ENCODE measurements at regions of chrX and their contacts with region 1.

Region 1: DNA sequence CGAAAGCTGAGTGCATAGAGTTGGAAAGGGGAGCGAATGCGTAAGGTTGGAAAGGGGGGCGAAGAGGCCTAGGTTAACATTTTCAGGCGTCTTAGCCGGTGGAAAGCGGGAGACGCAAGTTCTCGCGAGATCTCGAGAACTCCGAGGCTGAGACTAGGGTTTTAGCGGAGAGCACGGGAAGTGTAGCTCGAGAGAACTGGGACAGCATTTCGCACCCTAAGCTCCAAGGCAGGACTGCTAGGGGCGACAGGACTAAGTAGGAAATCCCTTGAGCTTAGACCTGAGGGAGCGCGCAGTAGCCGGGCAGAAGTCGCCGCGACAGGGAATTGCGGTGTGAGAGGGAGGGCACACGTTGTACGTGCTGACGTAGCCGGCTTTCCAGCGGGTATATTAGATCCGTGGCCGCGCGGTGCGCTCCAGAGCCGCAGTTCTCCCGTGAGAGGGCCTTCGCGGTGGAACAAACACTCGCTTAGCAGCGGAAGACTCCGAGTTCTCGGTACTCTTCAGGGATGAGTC is at the start of gene DDX3X:
- DNase-seq: peak; percentile 95
- H3K4me3 Mint-ChIP-seq: peak within 1 kb of the TSS; percentile 98
- H3K27ac Mint-ChIP-seq: peak within 1 kb of the TSS; percentile 100
- H3K4me1 Mint-ChIP-seq: peaks cover 25% of the 10 kb centered on the region
- H3K27me3 Mint-ChIP-seq: no peaks in the 10 kb centered on the region
- total RNA-seq, gene DDX3X: 307 and 313 TPM in 2 replicates

Region 2: DNA sequence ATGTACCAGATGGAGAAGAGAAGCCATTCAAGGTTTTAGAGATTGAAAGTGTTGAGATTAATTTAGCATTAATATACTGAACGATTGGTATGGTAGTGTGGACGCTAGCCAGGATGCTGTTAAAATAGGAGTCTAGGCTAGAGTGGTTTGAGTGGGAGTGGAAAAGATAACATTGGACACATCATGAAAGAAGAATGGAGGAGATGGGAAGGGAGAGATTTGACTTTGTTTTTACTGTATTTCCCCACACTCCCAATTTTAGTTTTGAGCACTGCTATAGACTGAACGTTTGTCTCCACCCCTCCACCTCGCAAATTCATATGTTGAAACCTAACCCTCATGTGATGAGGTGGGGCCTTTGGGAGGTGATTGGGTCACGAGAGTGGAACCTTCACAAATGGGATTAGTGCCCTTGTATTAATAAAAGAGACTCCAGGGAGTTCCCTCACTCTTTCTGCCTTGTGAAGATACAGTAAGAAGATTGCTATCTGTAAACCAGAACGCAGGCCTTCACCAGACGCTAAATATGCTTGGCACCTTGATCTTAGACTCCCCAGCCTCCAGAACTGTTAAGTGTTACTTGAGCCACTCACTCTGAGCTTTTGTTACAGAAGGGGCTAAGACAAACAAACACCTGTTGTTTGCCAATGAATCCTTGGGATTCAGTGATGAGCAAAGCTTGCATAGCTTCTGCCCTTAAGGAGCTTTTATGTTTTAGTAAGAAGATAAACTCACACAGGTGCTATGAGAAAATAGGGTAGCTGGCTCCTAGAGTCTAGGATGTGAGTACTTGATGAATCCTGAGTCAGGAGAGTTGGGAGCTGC is 222.8 kb before region 1 on chrX:
- intact Hi-C with region 1: no loop called
- DNase-seq: no peak
- H3K4me3 Mint-ChIP-seq: no peak overlapping the region
- H3K27ac Mint-ChIP-seq: peak overlapping the region; percentile 29
- H3K4me1 Mint-ChIP-seq: peaks cover 46% of the 10 kb centered on the region
- H3K27me3 Mint-ChIP-seq: no peaks in the 10 kb centered on the region

Region 3: GRCh38 chrX:41275661-41276609 is 57.9 kb before region 1 on chrX:
- intact Hi-C with region 1: loop called (anchors 2 kb)
- DNase-seq: peak; percentile 82
- H3K4me3 Mint-ChIP-seq: peak overlapping the region; percentile 82
- H3K27ac Mint-ChIP-seq: peak overlapping the region; percentile 81
- H3K4me1 Mint-ChIP-seq: peaks cover 7% of the 10 kb centered on the region
- H3K27me3 Mint-ChIP-seq: peaks cover 2% of the 10 kb centered on the region

Region 4: DNA sequence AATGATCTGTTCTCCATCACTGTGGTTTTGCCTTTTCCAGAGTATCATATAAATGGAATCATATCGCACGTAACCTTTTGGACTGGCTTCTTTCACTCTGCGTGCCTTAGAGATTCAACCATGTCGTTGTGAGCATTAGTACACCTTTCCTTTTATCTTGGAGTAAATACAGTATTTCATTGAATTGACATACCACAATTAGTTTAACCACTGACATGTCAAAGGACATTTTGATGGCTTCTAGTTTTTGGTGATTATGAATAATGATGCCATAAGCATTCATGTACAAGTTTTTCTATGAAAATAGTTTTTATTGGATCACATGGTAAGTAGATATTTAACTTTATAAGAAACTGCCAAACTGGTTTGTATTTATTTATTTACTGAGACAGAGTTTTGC is 35.4 kb after region 1 on chrX:
- intact Hi-C with region 1: no loop called
- DNase-seq: no peak
- H3K4me3 Mint-ChIP-seq: no peak overlapping the region
- H3K27ac Mint-ChIP-seq: no peak overlapping the region
- H3K4me1 Mint-ChIP-seq: no peaks in the 10 kb centered on the region
- H3K27me3 Mint-ChIP-seq: no peaks in the 10 kb centered on the region

Region 5: GRCh38 chrX:41381685-41382084 is 47.9 kb after region 1 on chrX:
- intact Hi-C with region 1: loop called (anchors 2 kb)
- DNase-seq: no peak
- H3K4me3 Mint-ChIP-seq: no peak overlapping the region
- H3K27ac Mint-ChIP-seq: peak overlapping the region; percentile 56
- H3K4me1 Mint-ChIP-seq: peaks cover 26% of the 10 kb centered on the region
- H3K27me3 Mint-ChIP-seq: no peaks in the 10 kb centered on the region

Region 6: GRCh38 chrX:41512394-41512793 is 178.6 kb after region 1 on chrX:
- intact Hi-C with region 1: loop called (anchors 5 kb)
- DNase-seq: peak; percentile 77
- H3K4me3 Mint-ChIP-seq: peak overlapping the region; percentile 38
- H3K27ac Mint-ChIP-seq: peak overlapping the region; percentile 80
- H3K4me1 Mint-ChIP-seq: peaks cover 22% of the 10 kb centered on the region
- H3K27me3 Mint-ChIP-seq: no peaks in the 10 kb centered on the region

Measured in activated CD4-positive, alpha-beta T cell treated with anti-CD3 and anti-CD28 coated beads, Interleukin-2, amount 10 ng/mL, durations not matched to agents 24 days and 14 days (primary cell).